ENCODE measurements at regions of chr20 and their contacts with region 1.

Region 1: GRCh38 chr20:43749734-43750294 is 23.0 kb upstream of the GTSF1L start:
- DNase-seq: peak; percentile 77
- ATAC-seq: peak; percentile 52
- H3K4me3 ChIP-seq: no peak overlapping the region
- H3K4me3 Mint-ChIP-seq: peak overlapping the region; percentile 16
- H3K27ac ChIP-seq: no peak overlapping the region
- H3K27ac Mint-ChIP-seq: peak overlapping the region; percentile 23
- H3K4me1 ChIP-seq: peaks cover 35 to 40% of the 10 kb centered on the region in 2 donors
- H3K4me1 Mint-ChIP-seq: peaks cover 38% of the 10 kb centered on the region
- H3K27me3 ChIP-seq: no peaks in the 10 kb centered on the region
- H3K27me3 Mint-ChIP-seq: no peaks in the 10 kb centered on the region
- CTCF ChIP-seq: peak; percentile 100

Region 2: DNA sequence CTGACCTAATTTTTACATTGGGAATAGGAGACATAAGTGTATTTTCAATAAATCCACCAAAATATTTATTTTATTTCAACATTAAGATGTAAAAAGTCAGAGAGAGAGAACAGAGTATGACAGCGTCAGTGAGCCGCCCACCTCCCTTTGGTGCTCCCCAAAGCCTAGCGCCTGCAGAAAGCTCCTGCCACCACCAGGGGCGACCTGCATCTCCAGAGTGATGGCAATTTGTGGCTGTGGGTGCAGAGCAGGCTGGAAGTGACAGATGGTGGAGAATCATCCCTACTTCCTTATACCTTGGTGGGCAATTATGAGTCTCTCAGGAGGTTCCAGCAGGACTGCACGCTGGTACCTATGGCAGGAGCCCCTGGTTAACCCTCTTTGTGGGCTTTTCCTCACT is 647.4 kb before region 1 on chr20:
- CTCF ChIA-PET with region 1: no interaction called
- POLR2A ChIA-PET with region 1: no interaction called
- intact Hi-C with region 1: no loop called
- DNase-seq: no peak
- ATAC-seq: no peak
- H3K4me3 ChIP-seq: no peak overlapping the region
- H3K4me3 Mint-ChIP-seq: no peak overlapping the region
- H3K27ac ChIP-seq: no peak overlapping the region
- H3K27ac Mint-ChIP-seq: no peak overlapping the region
- H3K4me1 ChIP-seq: no peaks in the 10 kb centered on the region
- H3K4me1 Mint-ChIP-seq: no peaks in the 10 kb centered on the region
- H3K27me3 ChIP-seq: peaks cover 0 to 3% (median 0%) of the 10 kb centered on the region in 4 experiments
- H3K27me3 Mint-ChIP-seq: no peaks in the 10 kb centered on the region
- CTCF ChIP-seq: no peak

Region 3: GRCh38 chr20:43728044-43728529 is 21.7 kb before region 1 on chr20:
- CTCF ChIA-PET with region 1: interaction called, 13 read pairs
- POLR2A ChIA-PET with region 1: no interaction called
- intact Hi-C with region 1: no loop called
- DNase-seq: peak; percentile 64
- ATAC-seq: peak; percentile 74
- H3K4me3 ChIP-seq: no peak overlapping the region
- H3K4me3 Mint-ChIP-seq: peak overlapping the region; percentile 26
- H3K27ac ChIP-seq: peak overlapping the region in 1 of 2 donors; percentile 9
- H3K27ac Mint-ChIP-seq: peak overlapping the region; percentile 27
- H3K4me1 ChIP-seq: peaks cover 28 to 30% of the 10 kb centered on the region in 2 donors
- H3K4me1 Mint-ChIP-seq: peaks cover 42% of the 10 kb centered on the region
- H3K27me3 ChIP-seq: no peaks in the 10 kb centered on the region
- H3K27me3 Mint-ChIP-seq: no peaks in the 10 kb centered on the region
- CTCF ChIP-seq: no peak

Region 4: DNA sequence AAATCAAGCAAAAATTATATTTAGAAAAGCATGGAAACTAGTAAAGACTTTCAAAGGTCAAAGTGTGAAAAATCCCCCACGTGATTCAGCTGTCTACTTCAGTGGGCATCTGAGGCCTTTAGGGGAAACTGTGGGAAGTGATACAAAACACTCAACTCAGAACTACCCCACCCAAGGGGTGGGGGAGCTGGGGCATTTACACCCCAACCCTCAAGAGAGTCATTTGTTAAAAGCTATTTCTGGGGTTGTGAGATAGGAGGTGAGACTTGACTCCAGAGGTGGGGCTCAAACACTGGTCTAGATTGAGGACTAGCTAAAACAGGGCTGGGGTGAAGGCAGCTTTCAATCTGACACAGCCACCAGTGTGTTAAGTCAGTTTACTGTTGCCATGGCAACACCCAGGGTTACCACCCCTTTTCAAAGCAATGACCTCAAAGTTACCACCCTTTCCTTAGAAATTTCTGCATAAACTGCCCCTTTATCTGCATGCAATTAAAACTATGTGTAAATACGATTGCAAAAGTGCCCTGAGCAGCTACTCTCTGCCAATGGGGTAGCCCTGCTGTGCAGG is 13.1 kb before region 1 on chr20:
- CTCF ChIA-PET with region 1: interaction called, 14 read pairs
- POLR2A ChIA-PET with region 1: no interaction called
- intact Hi-C with region 1: no loop called
- DNase-seq: peak; percentile 52
- ATAC-seq: peak; percentile 65
- H3K4me3 ChIP-seq: no peak overlapping the region
- H3K4me3 Mint-ChIP-seq: no peak overlapping the region
- H3K27ac ChIP-seq: peak overlapping the region in 1 of 2 donors; percentile 23
- H3K27ac Mint-ChIP-seq: peak overlapping the region; percentile 56
- H3K4me1 ChIP-seq: peaks cover 19 to 34% of the 10 kb centered on the region in 2 donors
- H3K4me1 Mint-ChIP-seq: peaks cover 37% of the 10 kb centered on the region
- H3K27me3 ChIP-seq: no peaks in the 10 kb centered on the region
- H3K27me3 Mint-ChIP-seq: no peaks in the 10 kb centered on the region
- CTCF ChIP-seq: no peak

Region 5: GRCh38 chr20:44080646-44081267 is 330.9 kb after region 1 on chr20:
- CTCF ChIA-PET with region 1: interaction called, 135 read pairs
- POLR2A ChIA-PET with region 1: no interaction called
- intact Hi-C with region 1: loop called (anchors 1 kb)
- DNase-seq: peak; percentile 81
- ATAC-seq: peak; percentile 97
- H3K4me3 ChIP-seq: no peak overlapping the region
- H3K4me3 Mint-ChIP-seq: no peak overlapping the region
- H3K27ac ChIP-seq: no peak overlapping the region
- H3K27ac Mint-ChIP-seq: peak overlapping the region; percentile 26
- H3K4me1 ChIP-seq: no peaks in the 10 kb centered on the region
- H3K4me1 Mint-ChIP-seq: peaks cover 8% of the 10 kb centered on the region
- H3K27me3 ChIP-seq: no peaks in the 10 kb centered on the region
- H3K27me3 Mint-ChIP-seq: no peaks in the 10 kb centered on the region
- CTCF ChIP-seq: peak; percentile 99

Region 6: GRCh38 chr20:44187051-44187762 is 437.4 kb after region 1 on chr20 and contains the start of gene JPH2:
- CTCF ChIA-PET with region 1: interaction called, 10 read pairs
- POLR2A ChIA-PET with region 1: no interaction called
- intact Hi-C with region 1: loop called (anchors 5 kb)
- DNase-seq: peak; percentile 27
- ATAC-seq: no peak
- H3K4me3 ChIP-seq: peak within 1 kb of the TSS in 4 of 5 experiments; percentile 0 to 42 (median 18)
- H3K4me3 Mint-ChIP-seq: peak within 1 kb of the TSS; percentile 80
- H3K27ac ChIP-seq: no peak within 1 kb of the TSS
- H3K27ac Mint-ChIP-seq: peak within 1 kb of the TSS; percentile 8
- H3K4me1 ChIP-seq: peaks cover 20 to 21% of the 10 kb centered on the region in 2 donors
- H3K4me1 Mint-ChIP-seq: peaks cover 32% of the 10 kb centered on the region
- H3K27me3 ChIP-seq: peaks cover 0 to 45% (median 15%) of the 10 kb centered on the region in 4 experiments
- H3K27me3 Mint-ChIP-seq: peaks cover 60% of the 10 kb centered on the region
- CTCF ChIP-seq: no peak
- total RNA-seq, gene JPH2: 0.10 and 0.17 TPM in 2 replicates

Region 7: DNA sequence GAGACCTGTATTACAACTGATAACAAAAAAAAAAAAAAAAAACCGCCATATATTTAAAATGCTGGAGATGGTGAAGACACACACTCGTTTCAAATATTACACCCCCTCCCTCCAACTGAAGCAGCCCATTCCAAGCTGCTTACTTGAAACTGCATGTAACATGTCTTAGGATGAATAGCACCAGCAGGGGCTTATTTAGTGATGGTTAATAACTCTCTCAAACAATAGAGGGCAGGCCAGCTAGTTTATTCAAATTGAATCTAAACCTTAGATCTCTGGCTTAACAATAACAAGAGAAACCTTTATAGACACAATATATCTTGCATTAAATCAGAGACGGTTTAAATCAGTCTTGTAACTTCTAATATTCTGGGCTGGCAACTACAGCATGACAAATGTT is 446.5 kb after region 1 on chr20:
- CTCF ChIA-PET with region 1: no interaction called
- POLR2A ChIA-PET with region 1: no interaction called
- intact Hi-C with region 1: loop called (anchors 5 kb)
- DNase-seq: peak; percentile 27
- ATAC-seq: no peak
- H3K4me3 ChIP-seq: no peak overlapping the region
- H3K4me3 Mint-ChIP-seq: no peak overlapping the region
- H3K27ac ChIP-seq: no peak overlapping the region
- H3K27ac Mint-ChIP-seq: no peak overlapping the region
- H3K4me1 ChIP-seq: no peaks in the 10 kb centered on the region
- H3K4me1 Mint-ChIP-seq: peaks cover 3% of the 10 kb centered on the region
- H3K27me3 ChIP-seq: no peaks in the 10 kb centered on the region
- H3K27me3 Mint-ChIP-seq: no peaks in the 10 kb centered on the region
- CTCF ChIP-seq: no peak